ENCODE measurements at regions of chr3 and their contacts with region 1.

Region 1: DNA sequence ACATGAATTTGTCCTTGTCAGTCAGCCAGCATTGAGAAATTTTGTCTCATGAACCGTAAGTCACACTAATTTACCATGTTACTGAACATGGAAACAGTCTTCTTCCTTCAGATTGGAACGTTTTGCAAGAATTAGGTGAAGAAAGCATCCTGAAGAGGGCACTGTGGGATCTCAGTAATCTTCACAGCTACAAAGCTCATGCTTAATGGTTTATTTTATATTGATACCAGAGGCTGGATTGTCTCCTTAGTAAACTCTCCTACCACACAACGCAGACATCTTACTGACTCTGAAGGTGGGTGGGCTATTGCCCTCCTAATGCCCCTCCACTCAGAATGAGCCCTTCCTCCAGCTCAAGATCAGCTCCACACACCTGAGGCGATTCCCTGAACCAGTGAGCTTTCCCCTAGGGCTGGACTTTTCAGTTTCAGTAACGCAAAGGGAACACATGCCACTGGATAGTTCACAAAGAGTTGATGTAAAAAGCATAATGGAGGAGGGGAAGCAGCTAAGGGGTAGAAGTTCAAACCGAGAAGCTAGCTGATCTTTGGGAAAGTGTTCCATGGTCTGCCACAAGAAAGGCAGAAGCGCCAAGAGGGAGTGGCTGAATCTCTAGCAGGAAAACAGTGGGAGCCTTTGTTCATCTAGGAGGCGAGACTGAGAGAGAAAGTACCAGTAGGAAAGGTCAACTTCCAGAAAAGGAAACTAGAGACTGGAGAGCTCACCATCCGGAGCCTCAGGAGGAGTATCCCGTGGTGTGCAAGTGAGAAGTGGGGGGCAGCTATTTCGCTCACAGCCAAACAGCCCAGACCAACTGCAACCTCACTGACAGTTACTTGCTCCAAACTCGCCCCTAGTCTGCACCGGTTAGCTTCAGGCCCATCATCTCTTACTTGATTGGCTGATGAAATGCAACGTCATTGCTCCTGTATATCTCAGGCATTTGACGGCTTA is at the start of gene SLC9C1:
- DNase-seq: peak; percentile 49 to 66
- H3K4me3 ChIP-seq: peak within 1 kb of the TSS; percentile 45
- H3K4me3 Mint-ChIP-seq: peak within 1 kb of the TSS; percentile 89
- H3K27ac Mint-ChIP-seq: peak within 1 kb of the TSS; percentile 78
- H3K4me1 ChIP-seq: no peaks in the 10 kb centered on the region
- H3K4me1 Mint-ChIP-seq: no peaks in the 10 kb centered on the region
- H3K27me3 ChIP-seq: no peaks in the 10 kb centered on the region
- H3K27me3 Mint-ChIP-seq: no peaks in the 10 kb centered on the region
- CTCF ChIP-seq: peak; percentile 57 to 68
- total RNA-seq, gene SLC9C1: 0.23 TPM in 1 of 2 replicates, not detected in the other

Region 2: GRCh38 chr3:112111785-112112402 is 181.8 kb before region 1 on chr3:
- CTCF ChIA-PET with region 1: interaction called, 12 read pairs
- POLR2A ChIA-PET with region 1: no interaction called
- intact Hi-C with region 1: no loop called
- DNase-seq: peak; percentile 54 to 65
- H3K4me3 ChIP-seq: no peak overlapping the region
- H3K4me3 Mint-ChIP-seq: no peak overlapping the region
- H3K27ac Mint-ChIP-seq: no peak overlapping the region
- H3K4me1 ChIP-seq: no peaks in the 10 kb centered on the region
- H3K4me1 Mint-ChIP-seq: peaks cover 12% of the 10 kb centered on the region
- H3K27me3 ChIP-seq: no peaks in the 10 kb centered on the region
- H3K27me3 Mint-ChIP-seq: no peaks in the 10 kb centered on the region
- CTCF ChIP-seq: peak; percentile 73 to 86

Region 3: GRCh38 chr3:112321867-112322649 is 28.4 kb after region 1 on chr3:
- CTCF ChIA-PET with region 1: interaction called, 58 read pairs
- POLR2A ChIA-PET with region 1: interaction called, 11 read pairs
- intact Hi-C with region 1: loop called (anchors 1 kb)
- DNase-seq: peak; percentile 84 to 89
- H3K4me3 ChIP-seq: peak overlapping the region; percentile 36
- H3K4me3 Mint-ChIP-seq: peak overlapping the region; percentile 78
- H3K27ac Mint-ChIP-seq: peak overlapping the region; percentile 95
- H3K4me1 ChIP-seq: peaks cover 31% of the 10 kb centered on the region
- H3K4me1 Mint-ChIP-seq: peaks cover 44% of the 10 kb centered on the region
- H3K27me3 ChIP-seq: no peaks in the 10 kb centered on the region
- H3K27me3 Mint-ChIP-seq: no peaks in the 10 kb centered on the region
- CTCF ChIP-seq: no peak

Region 4: GRCh38 chr3:112437146-112438022 is 143.7 kb after region 1 on chr3:
- CTCF ChIA-PET with region 1: interaction called, 20 read pairs
- POLR2A ChIA-PET with region 1: no interaction called
- intact Hi-C with region 1: loop called (anchors 1 kb)
- DNase-seq: peak in 1 of 2 experiments; percentile 18
- H3K4me3 ChIP-seq: no peak overlapping the region
- H3K4me3 Mint-ChIP-seq: no peak overlapping the region
- H3K27ac Mint-ChIP-seq: no peak overlapping the region
- H3K4me1 ChIP-seq: no peaks in the 10 kb centered on the region
- H3K4me1 Mint-ChIP-seq: no peaks in the 10 kb centered on the region
- H3K27me3 ChIP-seq: no peaks in the 10 kb centered on the region
- H3K27me3 Mint-ChIP-seq: peaks cover 6% of the 10 kb centered on the region
- CTCF ChIP-seq: peak; percentile 9 to 35

Region 5: GRCh38 chr3:112531358-112531781 is 237.7 kb after region 1 on chr3:
- CTCF ChIA-PET with region 1: interaction called, 5 read pairs
- POLR2A ChIA-PET with region 1: interaction called, 4 read pairs
- intact Hi-C with region 1: loop called (anchors 2 kb)
- DNase-seq: no peak
- H3K4me3 ChIP-seq: no peak overlapping the region
- H3K4me3 Mint-ChIP-seq: no peak overlapping the region
- H3K27ac Mint-ChIP-seq: no peak overlapping the region
- H3K4me1 ChIP-seq: no peaks in the 10 kb centered on the region
- H3K4me1 Mint-ChIP-seq: no peaks in the 10 kb centered on the region
- H3K27me3 ChIP-seq: no peaks in the 10 kb centered on the region
- H3K27me3 Mint-ChIP-seq: no peaks in the 10 kb centered on the region
- CTCF ChIP-seq: peak in 1 of 2 experiments; percentile 50